Activated CD4-positive, alpha-beta memory T cell treated with anti-CD3 and anti-CD28 coated beads for 36 hours (primary cell): ENCODE measurements at regions of chr18 and their contacts with region 1.

Region 1: GRCh38 chr18:658001-658946 is 821 bp downstream of the TYMS start:
- DNase-seq: peak; percentile 85
- H3K4me3 Mint-ChIP-seq: peak overlapping the region; percentile 92
- H3K27ac Mint-ChIP-seq: peak overlapping the region; percentile 84
- H3K4me1 Mint-ChIP-seq: peaks cover 12% of the 10 kb centered on the region
- H3K27me3 Mint-ChIP-seq: peaks cover 25% of the 10 kb centered on the region

Region 2: DNA sequence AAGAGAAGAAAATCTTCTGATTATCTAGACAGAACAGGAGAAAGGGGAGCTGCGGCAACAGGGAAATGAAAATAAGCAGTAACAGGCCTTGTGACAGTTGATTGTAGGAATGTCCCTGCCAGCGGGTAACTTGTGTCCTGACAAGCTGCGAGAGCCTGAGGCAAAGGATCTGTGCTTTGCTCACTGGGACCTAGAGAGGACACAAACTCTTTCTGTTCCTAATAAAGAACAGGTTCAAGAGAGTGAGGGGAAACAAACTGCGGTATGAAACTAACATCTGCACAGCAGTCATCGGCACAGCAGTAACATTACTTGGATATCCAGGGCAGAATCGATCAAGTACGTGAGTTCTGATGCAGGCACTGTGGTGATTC is 286.7 kb before region 1 on chr18:
- CTCF ChIA-PET with region 1: no interaction called
- POLR2A ChIA-PET with region 1: no interaction called
- intact Hi-C with region 1: no loop called
- DNase-seq: no peak
- H3K4me3 Mint-ChIP-seq: no peak overlapping the region
- H3K27ac Mint-ChIP-seq: no peak overlapping the region
- H3K4me1 Mint-ChIP-seq: no peaks in the 10 kb centered on the region
- H3K27me3 Mint-ChIP-seq: no peaks in the 10 kb centered on the region

Region 3: GRCh38 chr18:596288-596881 is 61.9 kb before region 1 on chr18:
- CTCF ChIA-PET with region 1: no interaction called
- POLR2A ChIA-PET with region 1: no interaction called
- intact Hi-C with region 1: loop called (anchors 5 kb)
- DNase-seq: no peak
- H3K4me3 Mint-ChIP-seq: no peak overlapping the region
- H3K27ac Mint-ChIP-seq: no peak overlapping the region
- H3K4me1 Mint-ChIP-seq: peaks cover 5% of the 10 kb centered on the region
- H3K27me3 Mint-ChIP-seq: peaks cover 18% of the 10 kb centered on the region

Region 4: DNA sequence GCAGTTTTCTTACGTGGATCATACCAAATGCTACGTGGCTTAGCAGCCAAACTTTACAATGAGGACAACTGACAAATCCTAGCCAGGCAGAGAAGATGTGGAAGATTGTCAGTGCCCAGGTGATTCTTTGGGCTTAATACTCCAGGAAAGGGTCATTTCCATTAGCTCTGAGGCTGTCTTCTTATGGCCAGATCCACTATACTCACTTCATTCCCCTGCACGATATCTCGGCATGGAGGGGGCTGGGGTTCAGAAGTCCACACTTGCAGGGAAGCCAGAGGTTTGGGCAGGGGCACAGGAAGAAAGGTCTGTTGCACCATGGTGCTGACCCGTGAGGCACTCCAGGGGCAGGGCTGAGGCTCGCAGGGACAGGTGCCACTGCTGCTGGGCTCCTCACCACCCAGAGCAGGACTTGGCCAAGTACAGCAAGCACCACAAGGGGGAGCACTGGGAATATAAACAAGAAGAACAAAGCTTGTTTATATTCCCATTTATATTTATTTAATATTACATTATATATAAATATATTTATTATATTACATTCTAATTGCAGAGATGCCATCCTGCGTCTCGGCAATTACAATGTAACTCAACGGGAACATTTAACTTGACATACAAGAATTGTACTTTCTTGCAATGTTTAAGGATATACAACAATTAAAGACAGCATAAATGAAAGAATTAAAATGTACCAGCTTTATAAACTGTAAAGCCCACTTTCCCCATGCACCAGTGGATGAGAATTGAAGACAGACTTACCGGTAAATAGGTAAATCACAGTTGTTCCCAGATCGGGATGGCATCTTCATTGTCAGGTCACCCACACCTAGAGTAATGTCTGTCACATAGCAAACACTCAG is 34.3 kb before region 1 on chr18:
- CTCF ChIA-PET with region 1: interaction called, 16 read pairs
- POLR2A ChIA-PET with region 1: no interaction called
- intact Hi-C with region 1: loop called (anchors 5 kb)
- DNase-seq: peak; percentile 69
- H3K4me3 Mint-ChIP-seq: no peak overlapping the region
- H3K27ac Mint-ChIP-seq: no peak overlapping the region
- H3K4me1 Mint-ChIP-seq: no peaks in the 10 kb centered on the region
- H3K27me3 Mint-ChIP-seq: peaks cover 10% of the 10 kb centered on the region

Region 5: GRCh38 chr18:681985-682384 is 23.7 kb after region 1 on chr18:
- CTCF ChIA-PET with region 1: no interaction called
- POLR2A ChIA-PET with region 1: interaction called, 9 read pairs
- intact Hi-C with region 1: loop called (anchors 1 kb)
- DNase-seq: peak; percentile 77
- H3K4me3 Mint-ChIP-seq: no peak overlapping the region
- H3K27ac Mint-ChIP-seq: peak overlapping the region; percentile 72
- H3K4me1 Mint-ChIP-seq: peaks cover 15% of the 10 kb centered on the region
- H3K27me3 Mint-ChIP-seq: no peaks in the 10 kb centered on the region

Region 6: DNA sequence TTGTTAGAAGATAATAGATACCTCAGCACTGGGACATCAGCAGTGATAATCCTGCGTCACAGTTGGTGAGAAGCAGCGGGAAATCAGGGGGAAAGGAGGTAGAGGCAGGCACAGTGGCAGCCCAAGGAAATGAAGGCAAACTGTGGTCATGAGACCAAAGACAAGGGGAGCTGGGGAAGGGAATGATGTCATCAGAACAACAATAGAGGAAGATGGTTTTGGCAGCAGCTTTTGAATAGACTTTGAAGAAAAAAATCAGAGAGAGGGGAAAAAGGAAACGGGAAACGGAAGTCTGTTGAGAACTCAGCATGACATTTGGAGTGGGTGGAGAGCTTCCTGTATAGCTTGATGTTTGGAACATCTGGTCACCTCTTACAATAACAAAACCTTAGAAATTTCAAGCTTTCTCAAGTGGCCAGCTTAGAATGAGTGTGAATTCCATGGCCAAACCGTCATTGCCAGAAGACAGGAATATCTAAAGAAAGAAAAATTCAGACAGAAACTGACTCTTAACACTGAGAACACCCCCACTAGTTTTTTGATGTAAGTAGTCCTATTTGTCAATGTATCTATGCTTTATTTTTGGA is 172.1 kb after region 1 on chr18:
- CTCF ChIA-PET with region 1: interaction called, 11 read pairs
- POLR2A ChIA-PET with region 1: no interaction called
- intact Hi-C with region 1: no loop called
- DNase-seq: peak; percentile 24
- H3K4me3 Mint-ChIP-seq: peak overlapping the region; percentile 2
- H3K27ac Mint-ChIP-seq: peak overlapping the region; percentile 44
- H3K4me1 Mint-ChIP-seq: peaks cover 19% of the 10 kb centered on the region
- H3K27me3 Mint-ChIP-seq: no peaks in the 10 kb centered on the region

Region 7: DNA sequence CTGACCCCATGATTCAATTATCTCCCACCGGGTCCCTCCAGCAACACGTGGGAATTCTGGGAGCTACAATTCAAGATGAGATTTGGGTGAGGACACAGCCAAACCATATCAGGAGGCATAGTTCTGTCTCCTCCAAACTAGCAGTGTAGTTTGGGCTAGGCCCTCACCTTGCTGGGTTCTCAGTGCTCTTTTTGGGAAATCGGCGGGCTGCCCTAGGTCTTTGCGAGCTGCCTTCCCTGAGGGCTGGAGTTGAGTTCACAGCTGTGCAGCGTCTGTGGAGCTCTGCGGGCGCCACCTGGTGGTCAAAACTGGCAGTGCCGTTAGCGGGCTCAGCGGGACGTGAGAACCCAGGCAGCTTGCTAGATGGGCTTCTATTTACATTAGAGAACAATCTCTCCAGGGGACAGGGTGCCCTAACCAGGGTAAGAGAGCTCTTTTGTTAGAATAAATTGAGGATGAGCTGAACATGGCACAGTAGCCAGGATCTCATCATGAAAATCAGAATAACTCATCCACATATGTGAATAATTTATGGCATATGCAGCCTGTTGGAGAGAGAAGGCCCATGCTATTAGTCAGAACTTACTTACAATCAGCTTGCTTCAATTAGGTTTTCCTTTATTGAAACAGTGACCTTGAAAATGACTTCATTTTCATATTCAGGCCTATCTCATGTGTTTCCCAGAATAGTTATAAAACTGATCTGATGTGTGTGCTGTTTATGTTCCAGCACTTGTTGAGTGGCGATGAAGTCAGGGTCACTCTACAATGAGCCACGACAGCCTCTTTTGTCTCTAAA is 181.1 kb after region 1 on chr18:
- CTCF ChIA-PET with region 1: interaction called, 11 read pairs
- POLR2A ChIA-PET with region 1: no interaction called
- intact Hi-C with region 1: no loop called
- DNase-seq: peak; percentile 91
- H3K4me3 Mint-ChIP-seq: no peak overlapping the region
- H3K27ac Mint-ChIP-seq: no peak overlapping the region
- H3K4me1 Mint-ChIP-seq: no peaks in the 10 kb centered on the region
- H3K27me3 Mint-ChIP-seq: no peaks in the 10 kb centered on the region